Activated T-helper 1 cell treated with anti-CD3 and anti-CD28 coated beads, Interleukin-12 subunit alpha, Interleukin-12 subunit beta, Interleukin-2, Interleukin-4 antibody, amounts not matched to agents 30 ng/mL and 10 ng/mL and 1 ng/mL, durations not matched to agents 14 hours and 24 hours and 36 hours (primary cell): ENCODE measurements at regions of chr16 and their contacts with region 1.

Region 1: GRCh38 chr16:66872943-66873684 is 7.2 kb upstream of the PDP2 start:
- DNase-seq: peak; percentile 90
- H3K4me3 Mint-ChIP-seq: peak overlapping the region; percentile 80
- H3K27ac Mint-ChIP-seq: peak overlapping the region; percentile 92
- H3K4me1 Mint-ChIP-seq: peaks cover 60% of the 10 kb centered on the region
- H3K27me3 Mint-ChIP-seq: no peaks in the 10 kb centered on the region

Region 2: GRCh38 chr16:66516808-66517585 is 356.1 kb before region 1 on chr16:
- intact Hi-C with region 1: loop called (anchors 1 kb)
- DNase-seq: peak; percentile 84
- H3K4me3 Mint-ChIP-seq: peak overlapping the region; percentile 88
- H3K27ac Mint-ChIP-seq: peak overlapping the region; percentile 99
- H3K4me1 Mint-ChIP-seq: peaks cover 78% of the 10 kb centered on the region
- H3K27me3 Mint-ChIP-seq: no peaks in the 10 kb centered on the region

Region 3: GRCh38 chr16:66728117-66728787 is 144.9 kb before region 1 on chr16:
- intact Hi-C with region 1: loop called (anchors 1 kb)
- DNase-seq: no peak
- H3K4me3 Mint-ChIP-seq: no peak overlapping the region
- H3K27ac Mint-ChIP-seq: no peak overlapping the region
- H3K4me1 Mint-ChIP-seq: peaks cover 16% of the 10 kb centered on the region
- H3K27me3 Mint-ChIP-seq: no peaks in the 10 kb centered on the region

Region 4: DNA sequence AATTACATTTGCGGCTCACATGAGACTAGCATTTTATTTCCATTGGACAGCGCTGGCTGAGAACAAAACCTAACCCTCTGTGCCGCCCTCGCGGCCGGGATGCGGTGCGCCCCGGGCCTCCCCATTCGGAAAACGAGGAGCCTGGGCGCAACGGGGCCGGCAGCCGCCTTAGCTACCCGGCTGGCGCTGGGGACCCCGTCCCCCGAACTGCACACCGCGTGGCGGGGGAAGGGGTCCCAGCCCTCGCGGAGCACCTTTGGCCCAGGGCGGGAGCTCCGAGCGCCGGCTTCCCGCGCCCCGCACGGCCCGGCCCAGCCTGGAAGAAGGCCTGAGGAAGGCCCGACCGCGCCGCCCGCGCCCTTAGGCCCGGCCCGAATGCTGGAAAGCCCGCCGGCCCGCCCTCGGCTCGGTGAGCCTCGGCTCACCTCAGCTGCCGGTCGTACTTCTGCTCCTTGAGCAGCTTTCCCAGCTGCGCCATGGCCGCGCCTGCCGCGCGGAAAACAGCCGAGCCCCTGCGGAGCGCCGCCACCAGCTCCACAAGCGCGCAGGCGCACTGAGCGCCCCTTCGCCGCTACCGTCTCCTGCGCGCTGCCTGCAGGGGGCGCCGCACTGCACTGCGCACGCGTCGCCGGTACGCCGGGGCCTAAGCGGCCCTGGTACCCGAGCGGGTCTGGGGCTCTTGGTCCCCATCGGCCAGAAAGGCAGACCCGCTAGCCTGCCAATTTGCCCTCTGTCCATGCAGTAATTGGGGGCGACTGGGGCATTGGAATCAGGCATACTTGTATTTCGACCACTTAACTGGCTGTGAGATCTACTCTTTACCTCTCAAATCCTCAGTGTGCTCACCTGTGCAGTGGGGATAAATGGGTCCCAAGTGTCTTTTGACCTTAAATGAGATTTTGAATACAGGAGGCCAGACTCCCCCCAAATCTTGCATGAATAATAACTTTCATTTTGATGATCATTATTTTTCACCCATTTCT is 42.4 kb before region 1 on chr16 and contains the start of gene NAE1:
- intact Hi-C with region 1: loop called (anchors 1 kb)
- DNase-seq: peak; percentile 90
- H3K4me3 Mint-ChIP-seq: peak within 1 kb of the TSS; percentile 83
- H3K27ac Mint-ChIP-seq: peak within 1 kb of the TSS; percentile 72
- H3K4me1 Mint-ChIP-seq: peaks cover 20% of the 10 kb centered on the region
- H3K27me3 Mint-ChIP-seq: peaks cover 2% of the 10 kb centered on the region
- total RNA-seq, gene NAE1: 114 and 120 TPM in 2 replicates

Region 5: DNA sequence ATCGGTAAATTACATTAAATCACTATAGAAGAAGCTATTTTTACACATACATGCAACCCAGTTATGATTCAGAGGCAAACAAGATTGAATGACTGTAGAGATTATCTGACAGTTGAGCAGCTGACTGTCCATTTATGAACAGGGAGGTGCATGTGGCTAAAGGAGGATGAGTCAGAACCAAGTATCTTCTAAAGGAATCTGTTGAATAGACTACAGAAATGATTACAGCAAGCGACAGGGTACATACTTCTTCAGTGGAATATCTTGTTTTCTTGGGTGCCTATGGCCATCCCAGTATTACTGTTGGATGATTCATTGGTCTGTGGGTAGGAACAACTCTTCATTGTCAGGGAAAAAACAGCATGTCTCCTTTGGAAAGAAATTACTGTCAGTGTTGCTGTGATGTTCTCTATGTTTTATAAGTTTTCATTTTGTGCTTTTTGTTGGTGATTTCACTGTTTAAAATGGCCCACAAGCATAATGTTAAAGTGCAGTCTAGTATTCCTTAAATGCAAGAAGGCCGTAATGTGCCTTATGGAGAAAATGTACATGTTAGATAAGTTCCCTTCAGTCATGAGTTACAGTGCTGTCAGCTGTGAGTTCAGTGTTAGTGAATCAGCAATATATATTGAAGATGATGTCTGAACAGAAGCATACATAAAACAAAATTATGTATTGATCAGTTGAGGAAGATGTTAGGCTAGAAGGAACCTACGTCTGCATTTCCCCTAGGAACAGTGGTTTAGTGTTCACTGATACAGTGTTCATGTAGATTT is 182.8 kb after region 1 on chr16:
- intact Hi-C with region 1: loop called (anchors 5 kb)
- DNase-seq: no peak
- H3K4me3 Mint-ChIP-seq: peak overlapping the region; percentile 74
- H3K27ac Mint-ChIP-seq: peak overlapping the region; percentile 96
- H3K4me1 Mint-ChIP-seq: peaks cover 51% of the 10 kb centered on the region
- H3K27me3 Mint-ChIP-seq: no peaks in the 10 kb centered on the region